ENCODE measurements at regions of chr6 and their contacts with region 1.

Region 1: GRCh38 chr6:26045065-26045927 is 41.9 kb upstream of the HFE start:
- DNase-seq: peak; percentile 45 to 90 (median 78)
- ATAC-seq: peak; percentile 63 to 66 (median 64)
- H3K4me3 ChIP-seq: peak overlapping the region; percentile 77 to 83
- H3K4me3 Mint-ChIP-seq: peak overlapping the region; percentile 84 to 91 (median 90)
- H3K27ac ChIP-seq: peak overlapping the region; percentile 90
- H3K27ac Mint-ChIP-seq: peak overlapping the region; percentile 98
- H3K4me1 ChIP-seq: peaks cover 5 to 26% of the 10 kb centered on the region in 2 experiments
- H3K4me1 Mint-ChIP-seq: peaks cover 15 to 27% (median 26%) of the 10 kb centered on the region in 3 donors
- H3K27me3 ChIP-seq: no peaks in the 10 kb centered on the region
- H3K27me3 Mint-ChIP-seq: no peaks in the 10 kb centered on the region

Region 2: DNA sequence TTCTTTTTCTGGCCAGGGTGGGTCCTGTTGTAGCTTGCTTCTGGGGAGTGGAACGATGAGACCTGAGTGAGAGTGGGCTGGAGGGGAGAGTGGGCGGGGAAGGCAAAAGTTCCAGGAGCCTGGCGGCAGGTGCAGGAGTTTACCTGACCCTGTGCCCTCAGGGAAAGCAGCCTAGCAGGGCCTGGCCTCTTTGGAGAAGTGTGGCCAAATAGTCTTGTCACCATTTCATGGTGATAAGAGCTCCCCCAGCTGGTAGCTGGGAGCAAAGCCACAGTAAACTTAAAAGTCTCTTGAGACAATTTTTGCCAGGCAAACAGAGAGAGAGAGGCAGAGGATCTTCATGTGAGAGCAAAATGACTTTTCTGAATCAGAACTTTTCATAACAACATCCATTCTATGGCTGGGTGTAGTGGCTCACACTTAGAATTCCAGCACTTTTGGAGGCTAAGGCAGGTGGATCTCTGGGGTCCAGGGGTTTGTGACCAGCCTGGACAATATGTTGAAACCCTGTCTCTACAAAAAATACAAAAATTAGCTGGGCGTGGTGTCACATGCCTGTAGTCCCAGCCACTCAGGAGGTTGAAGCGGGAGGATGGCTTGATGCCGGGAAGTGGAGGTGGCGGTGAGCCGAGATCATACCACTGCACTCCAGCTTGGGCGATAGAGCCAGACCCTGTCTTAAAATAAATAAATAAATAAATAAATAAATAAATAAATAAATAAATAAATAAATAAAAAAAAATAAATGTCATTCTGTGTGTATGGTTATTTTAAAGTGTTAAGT is 555.1 kb before region 1 on chr6:
- CTCF ChIA-PET with region 1: no interaction called
- POLR2A ChIA-PET with region 1: no interaction called
- DNase-seq: peak; percentile 27 to 81 (median 56)
- ATAC-seq: peak; percentile 69 to 83 (median 79)
- H3K4me3 ChIP-seq: no peak overlapping the region
- H3K4me3 Mint-ChIP-seq: no peak overlapping the region
- H3K27ac ChIP-seq: no peak overlapping the region
- H3K27ac Mint-ChIP-seq: peak overlapping the region; percentile 47 to 78
- H3K4me1 ChIP-seq: peaks cover 0 to 6% of the 10 kb centered on the region in 2 experiments
- H3K4me1 Mint-ChIP-seq: peaks cover 6 to 9% (median 7%) of the 10 kb centered on the region in 3 donors
- H3K27me3 ChIP-seq: no peaks in the 10 kb centered on the region
- H3K27me3 Mint-ChIP-seq: no peaks in the 10 kb centered on the region

Region 3: GRCh38 chr6:25889877-25890853 is 155.1 kb before region 1 on chr6:
- CTCF ChIA-PET with region 1: no interaction called
- POLR2A ChIA-PET with region 1: no interaction called
- DNase-seq: peak in 4 of 35 experiments; percentile 3 to 63 (median 14)
- ATAC-seq: peak in 1 of 4 experiments; percentile 45
- H3K4me3 ChIP-seq: no peak overlapping the region
- H3K4me3 Mint-ChIP-seq: no peak overlapping the region
- H3K27ac ChIP-seq: no peak overlapping the region
- H3K27ac Mint-ChIP-seq: no peak overlapping the region
- H3K4me1 ChIP-seq: no peaks in the 10 kb centered on the region
- H3K4me1 Mint-ChIP-seq: no peaks in the 10 kb centered on the region
- H3K27me3 ChIP-seq: no peaks in the 10 kb centered on the region
- H3K27me3 Mint-ChIP-seq: peaks cover 1 to 8% of the 10 kb centered on the region in 2 donors

Region 4: GRCh38 chr6:26031595-26032339 is 13.5 kb before region 1 on chr6:
- CTCF ChIA-PET with region 1: interaction called, 9 to 76 read pairs
- POLR2A ChIA-PET with region 1: interaction called, 56 to 682 read pairs
- DNase-seq: peak; percentile 61 to 95 (median 87)
- ATAC-seq: peak; percentile 68 to 72 (median 70)
- H3K4me3 ChIP-seq: peak overlapping the region; percentile 61 to 84
- H3K4me3 Mint-ChIP-seq: peak overlapping the region; percentile 90 to 95 (median 92)
- H3K27ac ChIP-seq: peak overlapping the region; percentile 74
- H3K27ac Mint-ChIP-seq: peak overlapping the region; percentile 94 to 98
- H3K4me1 ChIP-seq: peaks cover 30 to 32% of the 10 kb centered on the region in 2 experiments
- H3K4me1 Mint-ChIP-seq: peaks cover 48 to 53% (median 50%) of the 10 kb centered on the region in 3 donors
- H3K27me3 ChIP-seq: no peaks in the 10 kb centered on the region
- H3K27me3 Mint-ChIP-seq: peaks cover 0 to 2% of the 10 kb centered on the region in 2 donors

Region 5: GRCh38 chr6:26087284-26088115 is 42.2 kb after region 1 on chr6 and contains the start of gene HFE:
- CTCF ChIA-PET with region 1: no interaction called
- POLR2A ChIA-PET with region 1: interaction called, 5 to 10 read pairs
- DNase-seq: peak in 20 of 35 experiments; percentile 3 to 48 (median 20)
- ATAC-seq: peak; percentile 13 to 33 (median 20)
- H3K4me3 ChIP-seq: peak within 1 kb of the TSS; percentile 61 to 92
- H3K4me3 Mint-ChIP-seq: peak within 1 kb of the TSS; percentile 86 to 87 (median 86)
- H3K27ac ChIP-seq: peak within 1 kb of the TSS; percentile 60
- H3K27ac Mint-ChIP-seq: peak within 1 kb of the TSS; percentile 86 to 90
- H3K4me1 ChIP-seq: peaks cover 17 to 31% of the 10 kb centered on the region in 2 experiments
- H3K4me1 Mint-ChIP-seq: peaks cover 31 to 49% (median 32%) of the 10 kb centered on the region in 3 donors
- H3K27me3 ChIP-seq: no peaks in the 10 kb centered on the region
- H3K27me3 Mint-ChIP-seq: no peaks in the 10 kb centered on the region
- total RNA-seq, gene HFE: 1.0 to 2.4 (median 1.8) TPM